Activated naive CD4-positive, alpha-beta T cell treated with anti-CD3 and anti-CD28 coated beads for 36 hours (primary cell): ENCODE measurements at regions of chr13 and their contacts with region 1.

Region 1: DNA sequence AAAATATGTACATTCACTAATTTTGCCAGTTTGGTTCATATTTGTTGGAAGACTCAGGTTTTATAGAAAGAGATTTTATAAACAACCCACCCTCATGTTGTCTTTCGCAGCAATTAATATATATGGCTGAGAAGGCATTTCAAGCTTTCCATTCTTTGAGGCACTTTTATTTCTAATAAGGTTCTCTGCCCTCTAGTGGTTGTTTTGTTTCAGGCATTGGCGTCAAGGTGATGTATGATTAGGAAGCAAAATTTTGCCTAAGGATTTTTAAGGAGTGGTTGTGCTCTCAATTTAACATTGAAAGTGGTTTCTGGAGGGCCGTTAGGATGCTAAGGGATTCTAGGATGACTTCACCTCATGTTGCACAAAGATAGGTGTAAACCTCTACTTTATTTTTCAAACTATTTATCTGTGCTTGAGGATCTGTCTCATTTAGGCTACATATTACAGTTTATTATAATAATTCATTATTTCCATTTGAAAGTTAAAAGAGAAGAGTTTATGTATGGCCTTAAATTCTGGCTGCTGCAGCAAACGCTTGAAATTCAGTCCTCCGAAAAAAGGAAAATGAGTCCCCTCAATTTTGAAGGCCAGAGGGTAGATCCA is 35.9 kb downstream of the OXGR1 start:
- DNase-seq: no peak
- H3K4me3 Mint-ChIP-seq: no peak overlapping the region
- H3K27ac Mint-ChIP-seq: no peak overlapping the region
- H3K4me1 Mint-ChIP-seq: no peaks in the 10 kb centered on the region
- H3K27me3 Mint-ChIP-seq: peaks cover 5% of the 10 kb centered on the region

Region 2: GRCh38 chr13:96492766-96493165 is 465.6 kb before region 1 on chr13:
- CTCF ChIA-PET with region 1: no interaction called
- intact Hi-C with region 1: no loop called
- DNase-seq: no peak
- H3K4me3 Mint-ChIP-seq: no peak overlapping the region
- H3K27ac Mint-ChIP-seq: no peak overlapping the region
- H3K4me1 Mint-ChIP-seq: no peaks in the 10 kb centered on the region
- H3K27me3 Mint-ChIP-seq: no peaks in the 10 kb centered on the region

Region 3: GRCh38 chr13:96822895-96823294 is 135.5 kb before region 1 on chr13:
- CTCF ChIA-PET with region 1: interaction called, 4 read pairs
- intact Hi-C with region 1: loop called (anchors 5 kb)
- DNase-seq: no peak
- H3K4me3 Mint-ChIP-seq: no peak overlapping the region
- H3K27ac Mint-ChIP-seq: no peak overlapping the region
- H3K4me1 Mint-ChIP-seq: no peaks in the 10 kb centered on the region
- H3K27me3 Mint-ChIP-seq: no peaks in the 10 kb centered on the region

Region 4: DNA sequence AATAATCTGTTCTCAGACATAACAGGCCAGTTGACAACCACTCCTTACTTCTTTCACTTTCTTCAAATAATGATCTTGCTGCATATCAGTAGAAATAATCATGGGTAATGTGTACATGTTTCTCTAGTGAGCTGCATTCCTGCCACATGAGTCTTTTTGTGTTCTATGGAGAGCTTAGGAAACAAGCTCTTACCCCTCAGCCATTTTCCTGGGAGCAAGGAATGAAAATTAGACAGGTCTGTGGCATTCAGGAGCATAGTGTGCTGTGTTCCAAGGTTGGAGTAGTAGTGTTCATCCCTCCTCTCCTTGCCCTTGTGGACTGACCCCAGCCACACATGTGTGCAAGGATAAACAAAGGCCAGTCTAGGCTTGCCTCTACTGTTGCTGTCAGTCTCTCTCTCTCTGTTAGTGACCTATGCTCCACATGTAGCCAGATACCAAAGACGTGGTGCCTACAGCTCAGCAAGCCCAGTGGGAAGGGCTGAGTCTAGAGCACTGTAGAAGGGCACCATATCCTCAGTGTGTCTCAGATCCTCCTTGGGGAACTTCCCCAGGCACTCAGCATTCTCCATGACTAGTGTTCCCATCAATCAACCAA is 47.4 kb after region 1 on chr13:
- CTCF ChIA-PET with region 1: no interaction called
- intact Hi-C with region 1: no loop called
- DNase-seq: no peak
- H3K4me3 Mint-ChIP-seq: no peak overlapping the region
- H3K27ac Mint-ChIP-seq: no peak overlapping the region
- H3K4me1 Mint-ChIP-seq: no peaks in the 10 kb centered on the region
- H3K27me3 Mint-ChIP-seq: peaks cover 28% of the 10 kb centered on the region